ENCODE measurements at regions of chr5 and their contacts with region 1.

Region 1: DNA sequence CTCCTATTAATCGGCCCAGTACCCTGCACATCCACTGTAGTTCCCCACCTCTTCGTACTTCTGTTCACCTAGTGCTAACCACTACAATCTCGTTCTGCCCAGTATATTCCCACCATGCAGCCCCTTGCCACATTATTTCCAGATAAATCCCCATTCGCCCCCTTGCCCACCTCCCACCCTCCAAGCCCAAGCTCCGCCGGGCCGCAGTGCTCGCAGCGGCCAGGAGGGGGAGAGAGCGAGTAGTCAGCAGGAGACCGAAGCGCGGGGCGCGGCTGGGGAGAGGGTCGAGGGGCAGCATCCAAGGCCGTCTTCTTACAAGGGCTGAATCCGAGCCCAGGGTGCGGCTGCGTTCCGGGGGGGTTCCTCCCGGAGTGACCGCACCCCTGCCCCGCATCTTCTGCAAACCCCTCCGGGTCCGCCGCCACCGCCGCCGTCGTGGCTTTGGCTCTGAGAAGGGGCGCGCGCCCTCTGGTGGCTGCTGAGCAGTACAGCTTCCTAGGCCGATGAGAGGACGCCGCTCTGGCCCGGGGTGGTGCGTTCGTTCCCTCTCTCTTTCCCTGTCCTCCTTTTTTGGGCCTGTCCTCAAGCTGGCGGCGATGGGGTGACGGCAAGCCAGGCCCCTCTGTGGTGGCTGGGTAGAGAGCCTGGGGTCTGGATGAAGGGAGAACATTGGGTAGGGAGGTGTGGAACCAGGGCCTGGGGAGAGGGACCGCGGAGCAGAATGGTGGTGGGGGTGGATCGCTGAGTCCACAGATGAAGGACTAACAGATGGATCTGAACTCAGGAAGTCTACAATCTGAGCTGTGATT is 30.0 kb upstream of the PSD2 start:
- DNase-seq: peak; percentile 78 to 87 (median 84)
- H3K4me3 ChIP-seq: peak overlapping the region; percentile 23 to 56
- H3K4me3 Mint-ChIP-seq: peak overlapping the region; percentile 25 to 72 (median 54)
- H3K27ac ChIP-seq: no peak overlapping the region
- H3K27ac Mint-ChIP-seq: peak overlapping the region in 5 of 7 donors; percentile 31 to 66 (median 52)
- H3K4me1 ChIP-seq: peaks cover 9% of the 10 kb centered on the region
- H3K4me1 Mint-ChIP-seq: peaks cover 5 to 8% (median 7%) of the 10 kb centered on the region in 4 donors
- H3K27me3 ChIP-seq: peaks cover 19% of the 10 kb centered on the region
- H3K27me3 Mint-ChIP-seq: peaks cover 19 to 33% of the 10 kb centered on the region in 2 donors

Region 2: DNA sequence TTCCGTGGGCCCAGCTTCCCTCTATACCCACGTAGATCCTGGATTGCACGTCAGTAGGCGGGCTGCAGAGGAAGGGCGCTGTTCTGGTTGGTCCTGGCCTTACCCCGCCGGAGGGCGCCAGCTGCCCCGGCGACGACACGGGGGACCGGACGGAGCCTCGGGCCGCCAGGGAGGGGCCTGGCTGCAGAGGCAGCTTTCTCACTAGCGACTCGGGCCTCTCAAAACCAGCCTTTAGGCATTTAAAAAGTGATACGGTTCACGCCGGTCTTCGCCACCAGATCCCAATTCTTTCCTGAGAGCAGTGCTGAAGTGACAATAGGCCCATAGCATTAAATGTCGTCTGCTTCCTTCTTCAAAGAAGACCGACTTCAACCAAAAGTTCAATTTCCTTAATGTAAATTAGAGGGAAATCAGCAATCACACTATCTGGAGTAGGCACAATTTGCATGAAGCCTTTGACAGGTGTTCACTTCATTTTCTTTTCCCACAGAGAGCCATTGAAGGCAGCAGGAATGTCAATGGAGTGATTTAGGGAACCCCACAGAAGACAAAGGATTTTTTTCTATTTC is 222.1 kb before region 1 on chr5:
- CTCF ChIA-PET with region 1: no interaction called
- POLR2A ChIA-PET with region 1: no interaction called
- intact Hi-C with region 1: no loop called
- DNase-seq: peak; percentile 22 to 44 (median 33)
- H3K4me3 ChIP-seq: no peak overlapping the region
- H3K4me3 Mint-ChIP-seq: peak overlapping the region; percentile 7 to 63 (median 33)
- H3K27ac ChIP-seq: no peak overlapping the region
- H3K27ac Mint-ChIP-seq: peak overlapping the region in 1 of 7 donors; percentile 70
- H3K4me1 ChIP-seq: peaks cover 9% of the 10 kb centered on the region
- H3K4me1 Mint-ChIP-seq: peaks cover 0 to 7% (median 1%) of the 10 kb centered on the region in 4 donors
- H3K27me3 ChIP-seq: no peaks in the 10 kb centered on the region
- H3K27me3 Mint-ChIP-seq: peaks cover 1 to 3% of the 10 kb centered on the region in 2 donors

Region 3: DNA sequence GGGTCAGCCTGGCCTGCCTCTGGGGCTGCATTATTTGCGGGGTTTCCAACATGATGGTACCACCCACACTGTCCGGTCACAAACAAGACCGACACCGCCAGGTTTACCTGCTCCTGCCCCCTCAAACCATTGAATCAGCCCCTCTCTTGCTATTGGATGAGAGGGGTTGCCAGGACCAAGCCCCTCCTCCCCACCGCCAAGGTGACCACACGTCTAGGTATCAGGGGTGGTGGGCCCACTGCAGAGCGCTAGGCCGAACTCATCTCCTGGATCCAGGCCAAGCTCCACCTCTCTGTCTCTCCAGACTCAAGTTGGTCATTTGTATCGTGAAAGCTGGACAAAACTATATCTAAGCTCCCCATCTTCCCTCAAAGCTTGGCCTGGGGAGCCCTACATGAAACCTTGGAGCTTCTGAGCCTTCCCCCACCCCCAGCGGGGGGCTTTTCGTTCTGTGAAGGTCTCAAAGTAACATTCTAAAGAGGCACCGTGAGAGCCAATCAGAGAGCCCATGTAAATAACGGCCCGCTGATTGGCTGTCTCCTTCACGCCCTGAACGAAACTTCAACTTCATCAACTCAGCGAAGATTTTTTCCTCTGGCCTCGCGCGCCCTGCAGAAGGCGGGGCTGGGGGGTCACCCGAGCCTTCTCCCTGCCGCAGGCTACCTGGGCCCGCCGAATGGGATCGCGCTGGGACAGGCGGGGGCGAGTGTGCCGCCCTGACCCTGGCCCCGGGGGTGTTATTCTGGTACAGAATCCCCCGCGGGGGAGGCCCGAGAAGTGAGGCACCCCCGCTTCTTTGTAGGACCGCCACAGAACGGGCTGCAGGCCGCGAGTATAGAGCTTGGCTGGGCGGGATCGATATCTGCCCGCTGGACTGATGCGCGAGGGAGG is 19.6 kb before region 1 on chr5:
- CTCF ChIA-PET with region 1: interaction called, 6 read pairs
- POLR2A ChIA-PET with region 1: interaction called, 6 read pairs
- intact Hi-C with region 1: loop called (anchors 1 kb)
- DNase-seq: peak; percentile 35 to 59 (median 45)
- H3K4me3 ChIP-seq: peak overlapping the region in 1 of 2 donors; percentile 60
- H3K4me3 Mint-ChIP-seq: peak overlapping the region; percentile 82 to 97 (median 90)
- H3K27ac ChIP-seq: no peak overlapping the region
- H3K27ac Mint-ChIP-seq: peak overlapping the region in 4 of 7 donors; percentile 15 to 68 (median 46)
- H3K4me1 ChIP-seq: peaks cover 19% of the 10 kb centered on the region
- H3K4me1 Mint-ChIP-seq: peaks cover 12 to 41% (median 18%) of the 10 kb centered on the region in 4 donors
- H3K27me3 ChIP-seq: no peaks in the 10 kb centered on the region
- H3K27me3 Mint-ChIP-seq: peaks cover 8 to 14% of the 10 kb centered on the region in 2 donors

Region 4: DNA sequence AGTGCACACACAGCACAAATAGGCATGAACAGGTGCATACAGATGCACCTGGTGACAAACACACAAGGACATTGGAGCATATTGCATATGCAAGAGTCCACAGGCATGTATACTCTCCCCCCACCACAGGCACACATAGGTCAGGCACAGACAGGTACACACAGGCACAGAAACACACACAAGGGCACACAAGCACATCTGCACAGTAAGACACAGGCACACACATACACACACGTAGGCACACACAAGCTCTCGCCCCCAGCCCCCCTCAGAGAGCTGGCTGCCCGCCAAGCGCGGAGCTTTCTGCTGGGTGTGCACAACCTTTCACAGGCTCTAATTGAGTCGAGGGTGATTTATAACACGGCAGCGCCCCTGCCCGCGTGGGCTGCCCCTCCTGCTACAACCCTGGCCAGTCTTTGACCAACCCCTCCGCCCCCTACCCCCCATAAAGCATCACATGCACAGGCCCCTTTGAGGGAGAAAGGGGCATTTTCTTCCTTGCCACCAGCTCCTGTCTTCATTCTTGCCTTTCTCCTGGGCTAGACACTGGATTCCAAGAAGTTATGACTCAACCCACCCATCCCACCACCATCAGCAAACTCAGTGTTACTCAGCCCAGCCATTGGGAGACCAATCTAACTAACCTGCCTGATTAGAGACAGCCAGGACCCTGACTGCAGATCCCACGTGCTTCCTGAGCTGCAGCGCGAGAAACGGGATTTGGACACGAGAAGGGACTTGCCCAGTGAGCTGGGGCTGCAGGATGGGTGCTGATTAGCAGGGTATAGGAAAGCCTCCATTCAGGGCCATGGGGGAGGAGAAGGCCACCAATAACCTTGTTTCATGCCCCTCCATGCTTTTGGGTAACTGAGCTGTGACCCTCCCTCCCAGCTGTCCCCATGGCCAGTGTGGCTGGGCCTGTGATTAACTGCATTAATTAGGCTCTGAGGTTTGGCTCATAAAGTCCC is 12.8 kb before region 1 on chr5:
- CTCF ChIA-PET with region 1: interaction called, 14 read pairs
- POLR2A ChIA-PET with region 1: interaction called, 6 read pairs
- intact Hi-C with region 1: loop called (anchors 1 kb)
- DNase-seq: no peak
- H3K4me3 ChIP-seq: no peak overlapping the region
- H3K4me3 Mint-ChIP-seq: no peak overlapping the region
- H3K27ac ChIP-seq: no peak overlapping the region
- H3K27ac Mint-ChIP-seq: peak overlapping the region in 1 of 7 donors; percentile 10
- H3K4me1 ChIP-seq: peaks cover 20% of the 10 kb centered on the region
- H3K4me1 Mint-ChIP-seq: peaks cover 11 to 34% (median 19%) of the 10 kb centered on the region in 4 donors
- H3K27me3 ChIP-seq: peaks cover 24% of the 10 kb centered on the region
- H3K27me3 Mint-ChIP-seq: peaks cover 24 to 30% of the 10 kb centered on the region in 2 donors